Activated naive CD4-positive, alpha-beta T cell treated with anti-CD3 and anti-CD28 coated beads for 36 hours (primary cell): ENCODE measurements at regions of chr22 and their contacts with region 1.

Region 1: GRCh38 chr22:31977141-31977841 is 33.0 kb downstream of the YWHAH start:
- DNase-seq: peak; percentile 93
- H3K4me3 Mint-ChIP-seq: no peak overlapping the region
- H3K27ac Mint-ChIP-seq: no peak overlapping the region
- H3K4me1 Mint-ChIP-seq: peaks cover 5% of the 10 kb centered on the region
- H3K27me3 Mint-ChIP-seq: no peaks in the 10 kb centered on the region

Region 2: DNA sequence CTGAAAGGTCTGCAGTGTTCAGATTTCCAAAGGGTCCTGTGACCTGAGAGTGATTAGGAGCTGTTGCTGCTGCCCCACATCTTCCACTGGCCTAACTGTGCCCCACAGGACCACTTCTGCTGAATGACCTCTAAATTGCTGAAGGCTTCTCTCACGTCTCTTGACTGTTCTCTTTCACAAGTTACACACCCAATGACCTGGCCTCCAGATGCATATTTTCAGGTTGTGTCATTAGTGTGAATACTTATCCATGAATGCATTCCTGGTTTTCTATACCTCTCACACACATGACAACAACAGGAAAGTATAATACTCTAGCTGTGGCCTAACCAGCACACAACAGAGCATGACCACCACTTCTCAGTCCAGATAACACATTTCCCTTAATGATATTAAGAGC is 242.8 kb before region 1 on chr22:
- CTCF ChIA-PET with region 1: no interaction called
- intact Hi-C with region 1: no loop called
- DNase-seq: no peak
- H3K4me3 Mint-ChIP-seq: no peak overlapping the region
- H3K27ac Mint-ChIP-seq: no peak overlapping the region
- H3K4me1 Mint-ChIP-seq: peaks cover 40% of the 10 kb centered on the region
- H3K27me3 Mint-ChIP-seq: no peaks in the 10 kb centered on the region

Region 3: DNA sequence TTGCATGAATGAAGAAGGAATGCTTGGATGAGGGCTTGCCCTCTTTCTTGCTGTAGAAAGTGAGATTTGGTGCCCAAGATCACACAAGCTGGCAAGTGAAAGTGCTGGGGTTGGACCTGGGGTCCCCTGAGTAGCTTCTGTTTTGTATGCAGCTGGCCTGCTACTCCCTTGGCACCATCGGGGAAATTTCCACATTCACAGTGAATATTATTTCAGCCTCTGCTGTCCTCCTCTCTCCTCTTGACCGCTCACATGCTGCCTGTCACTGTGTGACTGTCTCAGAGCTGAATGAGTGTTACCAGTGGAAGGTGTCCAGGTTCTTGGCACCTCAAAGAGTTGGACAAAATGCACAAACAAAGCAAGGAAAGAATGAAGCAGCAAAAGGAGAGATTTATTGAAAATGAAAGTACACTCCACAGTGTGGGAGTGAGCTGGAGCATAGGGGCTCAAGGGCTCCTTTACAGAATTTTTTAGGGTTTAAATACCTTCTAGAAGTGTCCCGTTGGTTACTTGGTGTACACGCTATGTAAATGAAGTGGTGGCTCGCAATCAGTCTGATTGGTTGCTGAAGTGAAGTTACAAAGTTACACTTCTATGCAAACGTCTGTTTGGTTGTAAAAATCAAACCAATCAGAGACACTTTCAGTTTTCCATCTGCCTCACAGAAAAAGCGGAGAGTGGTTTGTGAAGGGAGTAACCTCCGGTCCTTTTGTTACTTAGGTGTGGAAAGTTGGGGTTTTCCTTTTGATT is 136.0 kb before region 1 on chr22:
- CTCF ChIA-PET with region 1: no interaction called
- intact Hi-C with region 1: no loop called
- DNase-seq: no peak
- H3K4me3 Mint-ChIP-seq: no peak overlapping the region
- H3K27ac Mint-ChIP-seq: no peak overlapping the region
- H3K4me1 Mint-ChIP-seq: peaks cover 4% of the 10 kb centered on the region
- H3K27me3 Mint-ChIP-seq: no peaks in the 10 kb centered on the region

Region 4: DNA sequence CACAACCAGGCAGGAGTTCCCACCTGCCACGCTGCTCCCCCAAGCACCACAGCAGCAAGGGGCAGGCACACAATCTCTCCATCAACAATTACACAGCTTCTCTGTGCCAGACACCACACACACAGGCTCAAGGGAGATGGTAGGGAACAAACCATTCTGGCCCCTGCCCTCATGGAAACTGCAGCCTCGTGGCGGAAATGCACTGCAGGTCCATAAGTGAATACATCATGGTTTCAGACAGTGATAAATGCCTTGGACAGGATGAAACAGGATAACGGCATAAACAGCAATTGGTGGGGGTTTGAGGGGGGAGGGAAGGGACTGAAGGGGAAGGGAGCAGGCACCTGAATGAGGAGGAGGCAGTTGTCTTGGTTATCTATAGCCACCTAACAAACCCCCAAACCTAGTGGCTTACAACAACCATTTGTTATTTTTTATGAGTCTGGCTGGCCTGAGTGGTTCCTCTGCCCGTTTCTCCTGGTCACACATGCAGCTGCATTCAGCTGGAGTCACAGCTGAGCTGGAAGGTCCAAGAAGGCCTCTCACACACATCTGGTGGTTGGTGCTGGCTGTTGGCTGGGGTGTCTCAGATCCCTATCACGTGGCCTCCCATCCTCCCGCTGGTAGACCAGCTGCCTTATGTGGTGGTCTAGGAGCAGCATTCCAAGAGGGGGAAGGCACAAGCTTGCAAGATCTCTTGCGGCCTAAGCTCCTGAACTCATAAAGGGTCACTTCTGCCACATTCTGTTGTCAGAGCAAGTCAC is 47.9 kb before region 1 on chr22:
- CTCF ChIA-PET with region 1: no interaction called
- intact Hi-C with region 1: no loop called
- DNase-seq: no peak
- H3K4me3 Mint-ChIP-seq: no peak overlapping the region
- H3K27ac Mint-ChIP-seq: no peak overlapping the region
- H3K4me1 Mint-ChIP-seq: no peaks in the 10 kb centered on the region
- H3K27me3 Mint-ChIP-seq: peaks cover 9% of the 10 kb centered on the region

Region 5: GRCh38 chr22:32080904-32081303 is 103.6 kb after region 1 on chr22:
- CTCF ChIA-PET with region 1: interaction called, 89 read pairs
- intact Hi-C with region 1: loop called (anchors 1 kb)
- DNase-seq: peak; percentile 51
- H3K4me3 Mint-ChIP-seq: no peak overlapping the region
- H3K27ac Mint-ChIP-seq: no peak overlapping the region
- H3K4me1 Mint-ChIP-seq: no peaks in the 10 kb centered on the region
- H3K27me3 Mint-ChIP-seq: no peaks in the 10 kb centered on the region

Region 6: DNA sequence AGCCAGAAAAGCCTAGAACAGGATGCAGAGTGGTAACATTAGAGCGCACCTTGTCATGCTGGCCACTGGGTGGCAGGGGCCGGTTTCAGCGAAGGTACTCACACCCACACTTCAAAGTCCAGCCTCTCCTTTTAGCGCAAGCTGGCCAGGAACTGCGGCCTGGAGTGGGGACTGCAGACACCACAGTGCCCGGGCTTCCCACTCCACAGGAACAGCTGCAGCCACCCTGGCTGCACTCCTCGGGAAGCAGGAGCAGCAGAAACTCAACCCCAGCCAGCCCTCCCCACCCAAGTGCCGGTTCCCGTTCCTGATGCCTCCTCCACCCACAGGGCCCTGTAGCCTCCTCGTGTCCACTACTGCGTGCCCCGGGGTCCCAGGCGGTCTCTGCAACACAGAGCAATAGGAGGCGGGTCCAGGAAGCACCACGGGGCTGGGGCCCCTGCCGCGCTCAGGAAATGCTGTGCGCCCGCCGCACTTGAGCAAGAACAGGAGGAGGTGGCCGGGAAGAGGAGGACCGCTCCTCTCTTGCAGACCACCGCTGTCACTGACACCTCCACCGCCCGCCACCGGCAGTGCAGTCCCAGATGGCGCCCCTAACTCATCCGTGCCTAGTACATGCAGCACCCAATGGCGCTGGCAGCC is 225.4 kb after region 1 on chr22:
- CTCF ChIA-PET with region 1: no interaction called
- intact Hi-C with region 1: loop called (anchors 1 kb)
- DNase-seq: peak; percentile 53
- H3K4me3 Mint-ChIP-seq: peak overlapping the region; percentile 66
- H3K27ac Mint-ChIP-seq: no peak overlapping the region
- H3K4me1 Mint-ChIP-seq: peaks cover 34% of the 10 kb centered on the region
- H3K27me3 Mint-ChIP-seq: peaks cover 17% of the 10 kb centered on the region

Region 7: GRCh38 chr22:32474635-32475467 is 497.6 kb after region 1 on chr22 and contains the start of gene FBXO7:
- CTCF ChIA-PET with region 1: interaction called, 6 read pairs
- intact Hi-C with region 1: loop called (anchors 1 kb)
- DNase-seq: peak; percentile 86
- H3K4me3 Mint-ChIP-seq: peak within 1 kb of the TSS; percentile 92
- H3K27ac Mint-ChIP-seq: peak within 1 kb of the TSS; percentile 93
- H3K4me1 Mint-ChIP-seq: peaks cover 17% of the 10 kb centered on the region
- H3K27me3 Mint-ChIP-seq: no peaks in the 10 kb centered on the region
- total RNA-seq, gene FBXO7: 62.5 to 65.9 TPM